ENCODE measurements at regions of chr6 and their contacts with region 1.

Region 1: GRCh38 chr6:39088331-39088730 is 26.7 kb downstream of the SAYSD1 start:
- DNase-seq: no peak
- H3K4me3 Mint-ChIP-seq: no peak overlapping the region
- H3K27ac Mint-ChIP-seq: no peak overlapping the region
- H3K4me1 Mint-ChIP-seq: peaks cover 34% of the 10 kb centered on the region
- H3K27me3 Mint-ChIP-seq: peaks cover 54% of the 10 kb centered on the region

Region 2: GRCh38 chr6:38871741-38872568 is 216.4 kb before region 1 on chr6:
- intact Hi-C with region 1: loop called (anchors 5 kb)
- DNase-seq: peak; percentile 34
- H3K4me3 Mint-ChIP-seq: no peak overlapping the region
- H3K27ac Mint-ChIP-seq: no peak overlapping the region
- H3K4me1 Mint-ChIP-seq: peaks cover 19% of the 10 kb centered on the region
- H3K27me3 Mint-ChIP-seq: peaks cover 18% of the 10 kb centered on the region

Region 3: DNA sequence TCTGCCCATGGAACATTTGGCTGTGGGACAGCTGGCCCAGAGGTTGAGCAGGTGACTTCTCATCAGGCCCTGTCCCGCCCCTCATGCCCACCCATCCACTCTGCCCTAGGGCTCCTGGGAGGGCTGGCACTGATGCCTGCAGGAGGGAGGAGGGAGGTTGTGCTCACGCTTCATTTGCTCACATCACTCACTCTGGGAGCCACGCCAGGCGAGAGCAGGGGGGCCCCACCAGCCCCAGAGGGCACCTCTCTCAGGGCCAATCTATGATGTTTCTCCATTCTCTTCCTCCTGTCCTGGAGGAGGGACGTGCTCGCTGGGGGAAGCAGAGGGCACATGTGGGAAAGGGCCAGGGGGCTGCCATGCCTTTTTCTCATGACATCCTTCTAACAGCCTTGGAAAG is 50.6 kb before region 1 on chr6:
- intact Hi-C with region 1: loop called (anchors 5 kb)
- DNase-seq: no peak
- H3K4me3 Mint-ChIP-seq: no peak overlapping the region
- H3K27ac Mint-ChIP-seq: no peak overlapping the region
- H3K4me1 Mint-ChIP-seq: peaks cover 9% of the 10 kb centered on the region
- H3K27me3 Mint-ChIP-seq: peaks cover 41% of the 10 kb centered on the region

Region 4: GRCh38 chr6:39062014-39062740 is 26.2 kb before region 1 on chr6:
- intact Hi-C with region 1: no loop called
- DNase-seq: no peak
- H3K4me3 Mint-ChIP-seq: no peak overlapping the region
- H3K27ac Mint-ChIP-seq: no peak overlapping the region
- H3K4me1 Mint-ChIP-seq: no peaks in the 10 kb centered on the region
- H3K27me3 Mint-ChIP-seq: peaks cover 34% of the 10 kb centered on the region

Region 5: DNA sequence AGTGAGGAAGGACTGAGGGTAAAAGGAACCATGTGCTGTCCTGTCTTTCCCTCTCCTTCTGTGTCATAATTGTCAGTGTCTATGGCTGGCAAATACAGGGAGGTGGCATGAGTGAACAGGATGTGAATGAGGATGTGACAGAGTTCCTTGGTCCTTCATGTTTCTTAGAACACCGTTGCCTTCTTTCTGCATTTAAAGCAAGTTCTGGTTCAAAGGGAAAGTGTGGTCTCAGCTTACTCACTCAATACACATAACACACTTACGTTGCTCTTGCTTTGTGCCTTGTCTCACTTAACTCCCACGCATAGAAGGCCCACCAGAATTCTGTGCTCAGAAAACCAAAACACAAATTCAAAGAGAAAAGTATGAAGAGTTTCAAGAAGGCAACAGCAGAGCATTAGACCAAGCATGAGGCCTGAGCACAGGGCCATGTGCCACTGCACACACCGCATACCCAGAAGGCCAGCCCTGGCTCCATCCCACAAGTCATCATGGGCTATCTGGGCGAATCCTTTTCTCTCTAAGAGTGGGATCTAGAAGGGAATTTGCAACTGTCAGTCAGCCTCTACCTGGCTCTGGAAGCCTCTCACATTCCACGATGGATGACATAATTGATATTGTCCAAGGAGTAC is 65.6 kb after region 1 on chr6:
- intact Hi-C with region 1: loop called (anchors 1 kb)
- DNase-seq: no peak
- H3K4me3 Mint-ChIP-seq: no peak overlapping the region
- H3K27ac Mint-ChIP-seq: peak overlapping the region; percentile 80
- H3K4me1 Mint-ChIP-seq: peaks cover 49% of the 10 kb centered on the region
- H3K27me3 Mint-ChIP-seq: no peaks in the 10 kb centered on the region

Region 6: GRCh38 chr6:39166189-39166911 is 78.0 kb after region 1 on chr6:
- intact Hi-C with region 1: loop called (anchors 5 kb)
- DNase-seq: peak; percentile 70
- H3K4me3 Mint-ChIP-seq: no peak overlapping the region
- H3K27ac Mint-ChIP-seq: no peak overlapping the region
- H3K4me1 Mint-ChIP-seq: peaks cover 3% of the 10 kb centered on the region
- H3K27me3 Mint-ChIP-seq: no peaks in the 10 kb centered on the region

Region 7: DNA sequence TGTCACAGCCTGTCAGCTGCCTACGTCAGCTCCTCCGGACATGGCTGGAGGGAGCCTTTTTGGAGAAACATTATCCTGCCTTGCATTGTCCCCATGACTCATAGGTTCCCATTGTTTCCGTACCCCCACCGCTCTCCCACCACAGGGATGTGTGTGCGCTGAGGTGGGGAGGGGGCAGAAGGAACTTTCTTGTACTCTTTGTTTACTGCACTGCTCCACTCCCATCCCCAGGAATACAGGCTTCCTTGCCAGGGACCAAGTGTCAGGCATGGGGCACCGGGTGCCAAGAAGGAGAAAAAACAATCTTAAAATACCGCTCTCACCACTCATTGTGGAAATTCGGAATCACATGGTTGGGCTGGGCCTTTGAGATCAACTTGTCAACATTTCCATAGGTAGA is 89.9 kb after region 1 on chr6:
- intact Hi-C with region 1: no loop called
- DNase-seq: no peak
- H3K4me3 Mint-ChIP-seq: no peak overlapping the region
- H3K27ac Mint-ChIP-seq: no peak overlapping the region
- H3K4me1 Mint-ChIP-seq: peaks cover 4% of the 10 kb centered on the region
- H3K27me3 Mint-ChIP-seq: no peaks in the 10 kb centered on the region

Region 8: GRCh38 chr6:39228992-39229767 is 140.8 kb after region 1 on chr6 and contains the start of gene KCNK5:
- intact Hi-C with region 1: loop called (anchors 10 kb)
- DNase-seq: peak; percentile 86
- H3K4me3 Mint-ChIP-seq: peak within 1 kb of the TSS; percentile 89
- H3K27ac Mint-ChIP-seq: peak within 1 kb of the TSS; percentile 72
- H3K4me1 Mint-ChIP-seq: peaks cover 32% of the 10 kb centered on the region
- H3K27me3 Mint-ChIP-seq: no peaks in the 10 kb centered on the region
- total RNA-seq, gene KCNK5: 41.5 and 42.6 TPM in 2 replicates

Region 9: DNA sequence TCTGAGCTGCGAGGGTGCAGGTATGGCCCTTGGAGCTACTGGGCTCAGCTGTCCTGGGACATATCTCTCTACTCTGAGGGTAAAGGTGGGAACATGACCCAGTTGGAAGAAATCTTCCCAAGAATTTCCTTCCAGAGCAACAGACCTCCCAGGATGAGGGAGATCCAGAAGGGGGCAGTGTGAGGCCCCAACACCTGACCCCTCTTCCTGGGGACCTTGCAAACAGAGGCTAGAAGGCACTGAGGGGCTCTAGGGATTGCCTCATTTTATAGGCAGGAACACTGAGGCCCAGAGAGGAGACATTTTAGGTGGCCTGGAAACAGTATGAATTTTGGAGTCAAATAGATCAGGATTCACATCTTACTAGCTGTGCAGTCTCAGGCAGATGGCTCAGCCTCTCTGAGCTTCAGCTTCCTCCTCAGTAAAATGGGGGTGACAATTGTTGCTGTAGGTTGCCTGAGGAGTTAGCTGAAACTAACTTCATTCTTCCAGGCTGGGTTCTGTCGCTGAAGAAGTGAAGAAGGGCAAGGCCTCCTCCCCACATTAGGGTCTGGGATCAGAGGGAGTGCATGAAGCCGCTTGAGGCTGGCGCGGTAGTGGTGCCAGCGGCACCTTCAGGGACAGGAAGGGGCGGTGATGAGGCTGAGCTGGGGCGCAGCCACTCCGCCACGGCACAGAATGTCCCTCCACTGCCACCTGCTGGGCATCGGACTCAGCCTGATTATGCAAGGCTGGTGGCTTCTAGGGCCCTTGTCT is 214.5 kb after region 1 on chr6:
- intact Hi-C with region 1: loop called (anchors 2 kb)
- DNase-seq: peak; percentile 77
- H3K4me3 Mint-ChIP-seq: peak overlapping the region; percentile 40
- H3K27ac Mint-ChIP-seq: peak overlapping the region; percentile 20
- H3K4me1 Mint-ChIP-seq: peaks cover 8% of the 10 kb centered on the region
- H3K27me3 Mint-ChIP-seq: peaks cover 4% of the 10 kb centered on the region